Aorta (tissue), 5 donors: ENCODE measurements at regions of chr10 and their contacts with region 1.

Region 1: GRCh38 chr10:17737027-17737965 is 14.7 kb upstream of the TMEM236 start:
- DNase-seq: no peak
- ATAC-seq: no peak
- H3K4me3 ChIP-seq: no peak overlapping the region
- H3K27ac ChIP-seq: no peak overlapping the region
- H3K4me1 ChIP-seq: no peaks in the 10 kb centered on the region
- H3K27me3 ChIP-seq: no peaks in the 10 kb centered on the region

Region 2: DNA sequence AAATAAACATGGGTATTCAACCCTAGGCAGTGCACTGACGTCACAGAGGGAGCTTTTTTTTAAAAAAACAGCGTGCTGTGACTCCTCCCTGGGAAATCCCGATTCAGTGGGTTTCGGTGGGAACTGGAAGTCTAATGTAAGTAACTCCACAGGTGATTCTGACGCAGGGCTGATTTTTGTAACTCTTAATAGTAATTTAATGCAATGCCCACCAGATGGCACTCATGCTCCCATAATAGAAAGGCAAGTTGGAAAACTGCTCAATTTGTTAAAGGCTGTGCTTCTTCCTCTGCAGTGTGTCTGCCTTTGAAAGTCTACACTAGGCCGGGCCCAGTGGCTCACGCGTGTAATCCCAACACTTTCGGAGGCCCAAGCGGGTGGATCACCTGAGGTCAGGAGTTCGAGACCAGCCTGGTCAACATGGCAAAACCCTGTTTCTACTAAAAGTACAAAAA is 909.2 kb before region 1 on chr10:
- intact Hi-C with region 1: loop called in 1 of 2 experiments (anchors 5 kb)
- DNase-seq: peak in 1 of 2 donors; percentile 66
- ATAC-seq: peak; percentile 93
- H3K4me3 ChIP-seq: peak overlapping the region in 1 of 2 donors; percentile 26
- H3K27ac ChIP-seq: peak overlapping the region in 1 of 2 donors; percentile 4
- H3K4me1 ChIP-seq: no peaks in the 10 kb centered on the region
- H3K27me3 ChIP-seq: no peaks in the 10 kb centered on the region

Region 3: DNA sequence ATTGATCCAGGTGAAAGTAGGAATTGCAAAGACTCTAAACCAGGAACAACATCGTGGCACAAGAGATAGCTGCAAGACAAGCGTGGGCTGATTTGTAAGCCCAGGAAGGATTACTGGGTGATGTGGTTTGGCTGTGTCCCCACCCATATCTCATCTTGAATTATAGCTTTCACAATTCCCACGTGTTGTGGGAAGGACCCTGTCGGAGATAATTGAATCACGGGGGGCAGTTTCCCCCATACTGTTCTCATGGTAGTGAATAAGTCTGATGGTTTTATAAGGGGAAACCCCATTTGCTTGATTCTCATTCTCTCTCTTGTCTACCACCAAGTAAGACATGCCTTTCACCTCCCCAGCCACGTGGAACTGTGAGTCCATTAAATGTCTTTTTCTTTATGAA is 342.4 kb before region 1 on chr10:
- intact Hi-C with region 1: no loop called
- DNase-seq: no peak
- ATAC-seq: no peak
- H3K4me3 ChIP-seq: no peak overlapping the region
- H3K27ac ChIP-seq: no peak overlapping the region
- H3K4me1 ChIP-seq: no peaks in the 10 kb centered on the region
- H3K27me3 ChIP-seq: no peaks in the 10 kb centered on the region

Region 4: GRCh38 chr10:17607603-17608332 is 129.5 kb before region 1 on chr10:
- intact Hi-C with region 1: loop called in 1 of 2 experiments (anchors 2 kb)
- DNase-seq: no peak
- ATAC-seq: peak; percentile 88
- H3K4me3 ChIP-seq: no peak overlapping the region
- H3K27ac ChIP-seq: no peak overlapping the region
- H3K4me1 ChIP-seq: no peaks in the 10 kb centered on the region
- H3K27me3 ChIP-seq: no peaks in the 10 kb centered on the region

Region 5: GRCh38 chr10:17643755-17644484 is 93.4 kb before region 1 on chr10 and contains the start of gene STAM:
- intact Hi-C with region 1: loop called in 1 of 2 experiments (anchors 10 kb)
- DNase-seq: peak; percentile 95 to 97
- ATAC-seq: peak; percentile 98
- H3K4me3 ChIP-seq: peak within 1 kb of the TSS; percentile 70 to 75
- H3K27ac ChIP-seq: peak within 1 kb of the TSS; percentile 54 to 71
- H3K4me1 ChIP-seq: peaks cover 3 to 6% of the 10 kb centered on the region in 2 donors
- H3K27me3 ChIP-seq: no peaks in the 10 kb centered on the region
- total RNA-seq, gene STAM: 21.8 to 28.6 TPM